ENCODE measurements at regions of chr4 and their contacts with region 1.

Region 1: GRCh38 chr4:81069706-81070331 is 39.3 kb downstream of the BMP3 start:
- DNase-seq: peak; percentile 64
- H3K4me3 ChIP-seq: no peak overlapping the region
- H3K27ac ChIP-seq: no peak overlapping the region
- H3K4me1 ChIP-seq: no peaks in the 10 kb centered on the region
- H3K27me3 ChIP-seq: no peaks in the 10 kb centered on the region
- CTCF ChIP-seq: peak; percentile 72

Region 2: GRCh38 chr4:81260443-81261101 is 190.8 kb after region 1 on chr4:
- CTCF ChIA-PET with region 1: no interaction called
- POLR2A ChIA-PET with region 1: no interaction called
- intact Hi-C with region 1: loop called (anchors 5 kb)
- DNase-seq: peak; percentile 9
- H3K4me3 ChIP-seq: no peak overlapping the region
- H3K27ac ChIP-seq: no peak overlapping the region
- H3K4me1 ChIP-seq: no peaks in the 10 kb centered on the region
- H3K27me3 ChIP-seq: no peaks in the 10 kb centered on the region
- CTCF ChIP-seq: peak; percentile 49

Region 3: DNA sequence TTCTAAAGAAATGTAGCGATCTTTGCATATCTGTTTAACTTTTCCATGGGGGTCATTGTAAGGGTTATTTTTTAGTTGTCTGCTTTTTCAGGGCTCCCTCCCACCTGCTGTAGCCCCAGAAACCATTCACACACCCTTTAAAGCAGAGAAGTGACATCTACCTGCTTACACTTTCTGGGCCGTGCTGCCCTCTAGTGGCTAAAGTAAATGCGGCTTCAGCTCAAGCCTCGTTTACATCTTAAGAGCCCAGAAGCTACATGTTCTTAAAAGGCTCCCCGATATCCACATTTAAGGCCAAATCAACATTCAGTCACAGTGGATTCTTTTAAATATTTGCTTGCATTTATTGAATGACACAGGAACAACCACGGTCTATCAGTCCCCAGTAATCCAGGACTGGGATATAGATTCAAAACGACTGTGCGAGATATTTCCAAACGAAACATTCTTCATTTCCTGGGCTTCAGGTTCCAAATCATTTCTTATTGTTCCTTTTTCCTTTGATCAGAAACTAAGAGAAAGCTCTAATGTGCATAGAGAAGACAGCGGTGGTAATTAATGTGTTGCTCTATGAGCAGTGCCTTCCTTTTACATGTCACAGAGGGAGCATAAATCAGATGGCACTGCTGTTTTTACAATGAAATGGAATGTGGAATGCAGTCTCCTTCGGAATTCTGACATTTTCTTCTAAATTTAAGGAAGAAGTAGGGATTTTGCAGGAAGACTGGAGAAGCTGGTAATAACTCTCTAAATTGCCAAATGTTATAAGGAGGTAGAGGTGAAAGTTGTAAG is 282.0 kb after region 1 on chr4:
- CTCF ChIA-PET with region 1: interaction called, 3 read pairs
- POLR2A ChIA-PET with region 1: no interaction called
- intact Hi-C with region 1: loop called (anchors 2 kb)
- DNase-seq: peak; percentile 57
- H3K4me3 ChIP-seq: no peak overlapping the region
- H3K27ac ChIP-seq: no peak overlapping the region
- H3K4me1 ChIP-seq: no peaks in the 10 kb centered on the region
- H3K27me3 ChIP-seq: no peaks in the 10 kb centered on the region
- CTCF ChIP-seq: peak; percentile 78